Activated CD4-positive, alpha-beta T cell treated with anti-CD3 and anti-CD28 coated beads for 36 hours (primary cell): ENCODE measurements at regions of chr3 and their contacts with region 1.

Region 1: DNA sequence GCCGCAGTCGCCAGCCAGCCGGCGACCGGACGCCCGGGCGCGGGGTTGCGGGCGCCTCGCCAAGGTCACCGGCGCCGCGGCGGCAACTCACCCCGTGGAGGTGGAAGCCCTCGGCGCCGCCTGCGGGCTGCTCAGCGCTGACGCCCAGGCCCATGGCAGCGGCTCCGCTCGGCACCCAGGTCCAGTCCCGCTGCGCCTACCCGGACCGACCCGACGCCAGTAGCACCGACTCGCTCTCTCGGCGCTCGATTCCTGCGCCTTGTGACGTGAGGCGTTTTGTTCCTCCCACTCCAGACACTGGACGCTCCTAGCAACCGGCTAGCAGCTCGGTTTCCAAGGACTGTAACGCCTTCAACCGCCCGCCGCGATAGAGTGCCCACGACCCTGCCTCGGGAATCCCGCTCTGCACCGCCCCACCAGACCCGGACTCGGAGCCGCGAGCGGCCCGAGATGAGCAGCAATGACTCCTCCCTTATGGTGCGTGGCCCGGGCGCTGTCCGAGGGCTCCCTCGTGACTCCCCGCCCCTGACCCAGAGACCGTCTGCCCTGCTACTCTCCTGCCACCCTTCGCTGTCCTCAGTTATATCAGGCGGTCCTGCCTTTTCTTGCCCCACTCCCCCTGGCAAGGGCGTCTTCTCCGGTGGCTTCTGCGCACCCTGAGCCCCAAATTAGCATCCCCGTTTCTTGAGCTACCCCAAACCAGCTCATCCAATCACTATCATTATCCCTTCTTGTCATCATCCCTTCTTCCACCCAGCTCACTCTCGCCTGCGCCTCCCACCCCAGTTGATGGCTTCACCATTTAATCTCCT is at the starts of genes GORASP1 and TTC21A:
- DNase-seq: peak; percentile 80
- ATAC-seq: peak; percentile 70
- H3K4me3 Mint-ChIP-seq: peak within 1 kb of the TSS; percentile 83
- H3K27ac Mint-ChIP-seq: peak within 1 kb of the TSS; percentile 77
- H3K4me1 Mint-ChIP-seq: peaks cover 36% of the 10 kb centered on the region
- H3K27me3 Mint-ChIP-seq: no peaks in the 10 kb centered on the region
- total RNA-seq, gene GORASP1: 23.0 to 23.8 TPM
- total RNA-seq, gene TTC21A: 1.8 to 2.3 TPM

Region 2: DNA sequence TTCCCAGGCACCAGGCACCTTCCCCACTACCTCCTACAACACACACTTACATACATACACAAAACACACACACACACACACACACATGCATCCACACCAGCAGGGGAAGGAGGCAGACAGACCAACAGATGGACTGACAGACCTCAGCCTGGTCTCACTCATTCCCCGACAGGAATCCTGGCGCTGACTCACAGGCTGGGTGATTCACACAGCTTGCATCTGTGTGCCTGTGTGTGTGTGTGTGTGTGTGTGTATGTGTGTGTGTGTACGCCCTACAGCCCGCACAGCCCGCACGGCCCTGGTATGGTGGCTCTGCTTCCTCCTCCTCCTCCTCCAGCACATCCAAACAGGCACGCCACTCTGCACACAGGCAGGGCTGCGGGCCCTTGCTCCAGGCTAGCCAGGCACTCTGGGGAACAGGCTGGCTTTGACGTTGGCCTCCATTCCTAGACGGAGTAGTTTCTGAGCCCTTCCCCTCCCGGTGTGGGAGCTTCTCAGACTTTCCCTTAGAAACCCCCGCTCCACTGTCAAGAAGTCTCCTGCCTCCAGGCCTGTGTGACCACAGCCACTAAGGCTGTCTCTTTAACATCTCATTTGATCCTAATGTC is 39.5 kb after region 1 on chr3:
- CTCF ChIA-PET with region 1: interaction called, 5 read pairs
- POLR2A ChIA-PET with region 1: interaction called, 5 read pairs
- intact Hi-C with region 1: loop called in 1 of 2 experiments (anchors 2 kb)
- DNase-seq: peak; percentile 90
- ATAC-seq: peak; percentile 68
- H3K4me3 Mint-ChIP-seq: peak overlapping the region; percentile 93
- H3K27ac Mint-ChIP-seq: peak overlapping the region; percentile 95
- H3K4me1 Mint-ChIP-seq: peaks cover 68% of the 10 kb centered on the region
- H3K27me3 Mint-ChIP-seq: no peaks in the 10 kb centered on the region

Region 3: DNA sequence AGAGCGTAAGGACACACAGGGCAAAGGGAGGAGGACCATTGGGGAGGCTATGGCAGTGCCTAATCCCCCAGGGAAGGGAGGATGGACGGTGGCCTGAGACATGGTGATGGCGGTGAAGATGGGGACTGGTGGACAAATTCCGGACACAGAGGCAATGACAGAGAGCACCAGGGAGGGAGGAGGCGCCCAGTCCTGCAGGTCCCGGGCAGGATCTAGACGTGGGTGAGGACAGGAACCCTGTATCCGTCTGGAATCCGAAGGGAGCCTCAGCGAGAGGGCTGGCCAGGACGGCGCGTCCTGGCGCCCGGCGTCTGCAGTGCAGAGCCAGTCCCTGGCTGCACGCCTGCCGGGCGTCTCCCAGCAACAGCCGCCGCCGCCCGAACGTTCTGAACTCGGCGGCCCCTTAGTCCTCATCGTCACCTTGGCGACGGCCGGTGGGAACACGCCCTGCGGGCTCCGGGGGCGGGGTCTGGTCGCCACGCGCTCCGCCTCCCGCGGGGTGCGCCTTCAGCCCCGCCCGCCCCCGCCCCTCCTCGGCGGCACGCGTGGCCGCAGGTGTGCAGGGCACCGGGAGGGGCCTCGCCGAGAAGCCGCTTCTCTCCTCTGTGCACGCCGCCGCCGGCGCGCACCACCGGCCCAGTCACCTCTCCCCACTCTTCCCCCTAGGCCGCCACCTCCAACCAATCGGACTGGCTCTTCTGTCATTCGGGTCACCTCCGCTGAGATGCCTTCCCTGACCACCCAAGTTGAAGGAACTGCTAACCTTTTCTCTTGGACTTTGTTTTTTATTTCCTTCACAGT is 73.2 kb after region 1 on chr3:
- CTCF ChIA-PET with region 1: no interaction called
- POLR2A ChIA-PET with region 1: no interaction called
- intact Hi-C with region 1: loop called (anchors 1 to 2 kb)
- DNase-seq: peak; percentile 94
- ATAC-seq: peak; percentile 77
- H3K4me3 Mint-ChIP-seq: peak overlapping the region; percentile 77
- H3K27ac Mint-ChIP-seq: peak overlapping the region; percentile 82
- H3K4me1 Mint-ChIP-seq: peaks cover 48% of the 10 kb centered on the region
- H3K27me3 Mint-ChIP-seq: no peaks in the 10 kb centered on the region